ENCODE measurements at regions of chr17 and their contacts with region 1.

Region 1: DNA sequence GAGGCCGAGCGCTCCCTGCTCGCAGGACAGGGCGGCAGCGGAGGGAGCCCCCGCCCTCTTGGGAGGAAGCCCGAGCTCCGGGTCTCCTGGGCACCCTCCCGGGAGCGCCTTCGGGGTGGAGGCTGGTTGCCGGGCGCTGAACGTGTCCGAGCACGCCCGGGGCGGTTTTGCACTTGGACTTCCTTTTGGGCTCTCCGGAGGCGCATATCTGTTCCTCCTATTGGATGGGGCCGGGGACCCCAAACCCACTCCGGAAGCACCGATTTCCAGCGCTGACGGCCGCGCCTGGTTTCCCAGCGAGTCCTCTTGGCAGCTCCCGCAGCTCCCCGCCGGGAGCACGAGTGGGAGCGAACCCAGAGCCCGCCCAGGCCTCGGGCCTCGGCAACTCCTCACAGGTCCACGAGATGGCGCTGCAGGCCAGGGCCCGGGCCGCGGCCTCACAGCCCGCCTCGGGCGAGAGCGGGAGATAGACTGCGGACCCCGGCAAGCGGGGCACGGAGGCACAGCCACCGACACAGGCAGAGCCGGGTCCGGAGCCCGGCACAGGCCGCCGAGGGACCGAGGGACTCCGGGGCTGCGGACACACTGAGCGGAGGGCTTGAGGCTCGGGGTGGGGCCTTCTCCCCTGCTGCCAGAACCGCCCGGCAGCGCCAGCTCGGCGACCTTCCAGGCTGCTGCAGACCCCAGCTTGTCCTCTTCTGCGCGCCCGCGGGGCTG is 12.7 kb downstream of the TBX2 start:
- DNase-seq: peak; percentile 91
- ATAC-seq: peak; percentile 82

Region 2: DNA sequence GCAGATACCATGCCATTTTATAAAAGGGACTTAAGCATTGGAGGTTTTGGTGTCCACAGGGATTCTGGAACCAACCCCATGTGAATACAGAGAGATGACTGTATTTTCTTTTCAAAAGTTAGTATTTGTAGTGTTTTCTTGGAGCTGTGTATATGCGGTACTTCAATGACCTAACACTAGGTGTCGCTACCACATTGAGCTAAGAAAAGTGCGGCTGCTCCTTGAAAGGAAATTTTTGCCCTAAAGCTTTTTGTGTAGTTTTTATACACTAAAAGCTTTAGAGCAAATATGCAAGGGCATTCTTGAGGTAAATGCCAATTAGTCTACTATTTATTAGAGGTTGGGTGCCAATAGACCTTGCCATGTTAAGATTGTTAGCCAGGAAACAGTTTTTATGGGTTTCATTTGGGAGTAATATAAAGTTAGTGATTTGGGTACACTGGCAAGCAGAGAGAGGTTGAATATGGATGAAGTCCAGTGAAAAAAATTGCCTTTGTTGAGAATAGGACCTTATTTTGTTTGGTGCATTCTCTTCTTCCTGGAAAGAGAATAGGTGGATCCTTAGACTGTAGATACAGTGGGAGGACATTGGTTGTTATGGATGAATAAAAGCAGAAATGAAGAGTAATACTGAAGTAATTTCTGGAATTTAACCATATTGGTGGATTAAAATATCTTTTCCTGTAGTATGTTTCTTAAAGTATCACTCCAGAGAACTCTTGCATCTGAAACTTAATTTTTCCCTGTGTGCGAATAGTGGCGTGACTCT is 691.4 kb before region 1 on chr17:
- intact Hi-C with region 1: loop called (anchors 5 kb)
- DNase-seq: no peak
- ATAC-seq: no peak

Region 3: DNA sequence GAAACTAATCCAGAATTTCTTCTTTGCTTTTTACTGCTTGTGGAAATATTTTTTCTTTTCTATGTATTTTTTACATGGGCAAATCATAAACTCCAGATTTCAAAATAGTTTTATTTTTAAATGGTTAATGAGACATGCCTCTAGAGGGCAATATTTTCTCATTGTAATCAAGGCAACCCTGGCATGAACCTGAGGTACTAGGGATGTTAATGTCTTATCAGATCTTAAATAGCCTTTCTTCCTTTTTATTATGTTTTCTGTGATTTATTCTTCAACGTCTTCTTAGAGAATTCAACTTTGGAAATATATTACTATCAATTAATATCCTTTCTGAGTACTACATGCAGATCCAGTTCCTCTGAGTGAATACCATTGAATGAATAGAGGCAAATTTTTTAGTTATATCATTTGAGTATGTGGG is 410.0 kb before region 1 on chr17:
- intact Hi-C with region 1: loop called (anchors 5 kb)
- DNase-seq: no peak
- ATAC-seq: no peak

Region 4: DNA sequence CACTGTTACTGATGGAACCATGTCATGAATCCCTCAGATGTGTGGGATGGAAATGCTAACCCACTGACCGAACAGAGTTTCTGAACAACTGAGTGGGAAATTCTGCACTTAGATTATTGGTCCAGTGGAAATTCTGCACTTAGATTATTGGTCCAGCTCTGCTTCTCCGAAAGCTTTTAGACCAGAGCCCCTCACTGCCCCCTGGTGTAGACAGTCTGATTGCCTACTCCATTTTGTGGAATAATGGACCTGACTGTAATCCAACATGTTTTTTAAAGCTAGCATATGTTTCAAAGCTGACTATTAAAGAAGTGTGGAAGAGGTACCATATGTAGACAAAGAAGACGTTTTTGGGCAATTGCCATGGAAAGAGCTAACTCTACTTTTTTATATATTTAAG is 63.0 kb before region 1 on chr17:
- intact Hi-C with region 1: no loop called
- DNase-seq: no peak
- ATAC-seq: no peak

Region 5: GRCh38 chr17:61475398-61476113 is 63.3 kb after region 1 on chr17:
- intact Hi-C with region 1: loop called (anchors 10 kb)
- DNase-seq: no peak
- ATAC-seq: no peak

Region 6: GRCh38 chr17:61551255-61551742 is 139.0 kb after region 1 on chr17:
- intact Hi-C with region 1: loop called (anchors 1 kb)
- DNase-seq: no peak
- ATAC-seq: no peak

Region 7: GRCh38 chr17:62065598-62066468 is 653.5 kb after region 1 on chr17:
- intact Hi-C with region 1: loop called (anchors 2 kb)
- DNase-seq: peak; percentile 100
- ATAC-seq: peak; percentile 100